Activated T-helper 1 cell treated with anti-CD3 and anti-CD28 coated beads, Interleukin-12 subunit alpha, Interleukin-12 subunit beta, Interleukin-2, Interleukin-4 antibody, amounts not matched to agents 30 ng/mL and 10 ng/mL and 1 ng/mL, durations not matched to agents 14 hours and 24 hours and 36 hours (primary cell): ENCODE measurements at regions of chr6 and their contacts with region 1.

Region 1: GRCh38 chr6:45801471-45802289 is 214.0 kb downstream of the CLIC5 start:
- DNase-seq: peak; percentile 33
- H3K4me3 Mint-ChIP-seq: peak overlapping the region; percentile 2
- H3K27ac Mint-ChIP-seq: no peak overlapping the region
- H3K4me1 Mint-ChIP-seq: no peaks in the 10 kb centered on the region
- H3K27me3 Mint-ChIP-seq: no peaks in the 10 kb centered on the region

Region 2: DNA sequence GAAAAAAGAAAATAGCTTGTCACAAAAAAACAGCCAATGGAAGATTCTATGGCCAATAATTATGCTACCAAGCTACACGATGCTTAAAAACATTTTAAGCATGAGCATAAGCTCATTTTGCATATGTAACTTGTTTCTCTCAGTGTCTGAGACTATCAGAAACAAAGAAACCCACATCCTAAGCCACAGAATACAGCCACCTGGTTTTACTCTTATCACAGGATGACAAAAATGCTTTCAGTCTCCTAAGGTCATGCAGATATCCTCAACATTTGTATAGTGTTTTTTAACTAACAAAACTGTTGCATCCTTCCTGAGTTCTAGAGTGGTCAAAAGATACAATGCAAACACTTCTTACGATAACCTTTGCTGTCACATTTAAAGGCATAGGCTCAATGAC is 645.6 kb before region 1 on chr6:
- intact Hi-C with region 1: loop called (anchors 2 kb)
- DNase-seq: peak; percentile 47
- H3K4me3 Mint-ChIP-seq: no peak overlapping the region
- H3K27ac Mint-ChIP-seq: peak overlapping the region; percentile 53
- H3K4me1 Mint-ChIP-seq: peaks cover 56% of the 10 kb centered on the region
- H3K27me3 Mint-ChIP-seq: no peaks in the 10 kb centered on the region

Region 3: GRCh38 chr6:45436544-45437438 is 364.9 kb before region 1 on chr6:
- intact Hi-C with region 1: loop called (anchors 2 kb)
- DNase-seq: no peak
- H3K4me3 Mint-ChIP-seq: peak overlapping the region; percentile 70
- H3K27ac Mint-ChIP-seq: peak overlapping the region; percentile 86
- H3K4me1 Mint-ChIP-seq: peaks cover 59% of the 10 kb centered on the region
- H3K27me3 Mint-ChIP-seq: no peaks in the 10 kb centered on the region

Region 4: DNA sequence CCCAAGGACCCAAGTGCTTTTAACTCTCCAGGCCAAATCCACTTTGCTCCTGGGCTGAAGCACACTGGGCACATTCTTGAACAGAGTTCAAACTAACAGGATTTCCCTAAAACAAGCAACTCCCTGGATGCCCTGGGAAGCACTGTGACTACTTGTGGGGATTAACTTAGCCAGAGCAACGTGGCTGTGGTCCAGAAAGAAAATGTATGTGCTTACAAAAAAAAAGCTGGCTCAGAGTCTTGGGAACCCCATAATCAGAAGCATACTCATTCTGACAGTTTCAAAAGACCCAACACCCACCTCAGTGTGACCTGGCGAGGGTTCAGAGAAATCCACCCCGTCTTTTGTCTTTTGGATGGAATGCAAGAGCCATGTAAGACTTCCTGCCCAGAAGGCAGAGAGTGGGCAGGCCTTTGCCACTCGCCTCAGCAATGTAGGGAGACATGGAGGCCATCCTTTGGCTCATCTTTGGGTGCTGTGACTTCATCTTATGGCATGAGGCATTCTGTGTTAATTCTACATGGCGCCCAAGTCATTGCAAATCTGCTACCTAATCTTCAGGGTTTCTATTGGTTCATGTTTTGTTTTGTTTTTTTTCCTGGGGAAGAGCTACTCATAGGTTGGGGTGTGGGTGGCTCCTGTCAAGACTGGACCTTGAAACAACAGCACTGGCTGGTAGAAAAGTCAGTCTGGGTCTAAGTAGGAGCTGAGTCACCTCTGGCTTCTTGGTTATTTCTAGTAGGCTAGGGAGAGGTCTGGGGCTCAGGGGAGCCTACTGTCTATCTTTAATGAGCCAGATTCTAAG is 175.4 kb before region 1 on chr6:
- intact Hi-C with region 1: loop called (anchors 1 kb)
- DNase-seq: no peak
- H3K4me3 Mint-ChIP-seq: no peak overlapping the region
- H3K27ac Mint-ChIP-seq: peak overlapping the region; percentile 41
- H3K4me1 Mint-ChIP-seq: peaks cover 36% of the 10 kb centered on the region
- H3K27me3 Mint-ChIP-seq: no peaks in the 10 kb centered on the region

Region 5: DNA sequence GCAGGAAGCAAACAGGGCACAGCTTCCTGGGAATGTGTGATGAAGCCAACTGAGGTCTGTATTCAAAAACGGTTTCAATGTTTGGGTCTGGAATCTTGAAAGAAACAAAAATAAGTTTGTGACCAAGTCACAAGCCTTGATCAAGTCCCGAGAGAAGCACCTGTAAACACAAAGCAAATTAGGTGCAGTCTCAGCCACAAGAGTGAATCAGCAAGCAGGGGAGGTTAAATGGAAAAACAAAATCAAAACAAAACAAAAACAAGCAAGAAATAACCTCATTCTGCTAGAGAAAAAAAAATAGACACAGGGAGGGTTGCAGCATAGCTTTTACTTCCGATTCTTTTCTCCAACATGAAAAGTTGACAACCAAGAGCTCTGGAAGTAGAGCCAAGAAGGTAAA is 12.3 kb after region 1 on chr6:
- intact Hi-C with region 1: loop called (anchors 1 kb)
- DNase-seq: no peak
- H3K4me3 Mint-ChIP-seq: no peak overlapping the region
- H3K27ac Mint-ChIP-seq: peak overlapping the region; percentile 50
- H3K4me1 Mint-ChIP-seq: peaks cover 23% of the 10 kb centered on the region
- H3K27me3 Mint-ChIP-seq: peaks cover 2% of the 10 kb centered on the region

Region 6: GRCh38 chr6:46011241-46012085 is 209.8 kb after region 1 on chr6:
- intact Hi-C with region 1: loop called (anchors 1 kb)
- DNase-seq: peak; percentile 63
- H3K4me3 Mint-ChIP-seq: peak overlapping the region; percentile 47
- H3K27ac Mint-ChIP-seq: peak overlapping the region; percentile 74
- H3K4me1 Mint-ChIP-seq: peaks cover 55% of the 10 kb centered on the region
- H3K27me3 Mint-ChIP-seq: peaks cover 11% of the 10 kb centered on the region